Right lobe of liver (tissue), 6 donors: ENCODE measurements at regions of chr14 and their contacts with region 1.

Region 1: GRCh38 chr14:70027785-70028428 is 148.7 kb downstream of the SMOC1 start:
- DNase-seq: peak; percentile 71 to 76 (median 72)
- ATAC-seq: peak; percentile 70 to 89 (median 76)
- H3K4me3 ChIP-seq: no peak overlapping the region
- H3K27ac ChIP-seq: peak overlapping the region in 1 of 3 donors; percentile 59
- H3K4me1 ChIP-seq: peaks cover 0 to 21% (median 4%) of the 10 kb centered on the region in 4 donors
- H3K27me3 ChIP-seq: no peaks in the 10 kb centered on the region
- CTCF ChIP-seq: peak; percentile 79 to 87 (median 83)
- POLR2A ChIP-seq: no peak

Region 2: DNA sequence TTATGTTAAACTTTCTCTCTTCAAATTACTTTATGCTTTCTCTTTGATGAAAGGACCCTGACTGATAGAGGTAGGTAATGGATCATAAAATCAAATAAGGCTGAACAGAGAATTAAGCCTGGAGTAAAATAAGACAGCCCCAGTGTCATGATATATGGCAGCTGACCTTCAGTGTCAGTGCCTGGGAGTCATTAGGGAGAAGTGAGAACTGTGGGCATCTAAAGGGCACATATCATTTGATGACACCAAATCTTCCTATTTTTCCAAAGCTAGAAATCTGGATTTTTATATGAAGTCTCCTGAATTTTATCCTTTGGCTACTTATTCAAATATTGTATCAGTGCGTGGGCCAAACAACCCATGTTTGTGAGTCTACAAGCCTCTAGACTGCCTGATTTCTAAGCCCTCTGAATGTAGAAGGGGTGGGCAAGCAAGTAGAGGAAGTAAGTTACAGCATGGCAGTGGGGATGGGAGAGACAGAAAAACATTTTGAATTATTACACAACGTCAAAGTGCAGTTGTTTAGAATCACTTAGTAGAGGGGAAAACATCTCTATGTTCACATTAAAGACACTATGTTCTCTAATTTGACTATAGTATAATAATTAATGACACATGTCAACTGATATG is 619.5 kb before region 1 on chr14:
- intact Hi-C with region 1: no loop called
- DNase-seq: no peak
- ATAC-seq: no peak
- H3K4me3 ChIP-seq: no peak overlapping the region
- H3K27ac ChIP-seq: no peak overlapping the region
- H3K4me1 ChIP-seq: peaks cover 0 to 5% (median 0%) of the 10 kb centered on the region in 4 donors
- H3K27me3 ChIP-seq: no peaks in the 10 kb centered on the region
- CTCF ChIP-seq: no peak
- POLR2A ChIP-seq: no peak

Region 3: GRCh38 chr14:69818757-69819191 is 209.1 kb before region 1 on chr14:
- intact Hi-C with region 1: loop called in 1 of 2 experiments (anchors 5 kb)
- DNase-seq: no peak
- ATAC-seq: peak; percentile 93 to 97 (median 96)
- H3K4me3 ChIP-seq: no peak overlapping the region
- H3K27ac ChIP-seq: no peak overlapping the region
- H3K4me1 ChIP-seq: no peaks in the 10 kb centered on the region
- H3K27me3 ChIP-seq: no peaks in the 10 kb centered on the region
- CTCF ChIP-seq: peak; percentile 77 to 90 (median 80)
- POLR2A ChIP-seq: no peak

Region 4: DNA sequence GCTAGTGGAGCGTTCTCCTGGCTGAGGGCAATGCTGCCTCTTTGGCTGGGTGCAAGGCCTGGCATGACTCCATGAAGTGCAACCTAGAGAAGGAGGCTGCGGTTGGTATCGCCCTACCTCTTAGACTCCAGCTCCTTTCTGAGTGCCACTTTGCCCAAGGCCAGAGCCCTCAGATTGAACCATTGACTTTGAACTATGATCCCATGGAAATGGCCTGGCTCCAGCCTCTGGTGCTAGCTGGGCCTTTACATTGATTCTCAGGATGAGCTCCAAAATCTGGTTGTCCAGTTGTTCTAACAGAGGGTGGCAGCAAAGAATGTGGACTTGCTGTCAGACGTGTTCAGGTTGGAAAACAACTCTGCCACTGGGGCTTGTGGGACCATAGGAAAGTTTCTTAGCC is 164.8 kb before region 1 on chr14:
- intact Hi-C with region 1: loop called in 1 of 2 experiments (anchors 10 kb)
- DNase-seq: peak; percentile 49 to 77 (median 71)
- ATAC-seq: peak; percentile 97 to 99 (median 98)
- H3K4me3 ChIP-seq: no peak overlapping the region
- H3K27ac ChIP-seq: peak overlapping the region in 2 of 3 donors; percentile 61 to 65
- H3K4me1 ChIP-seq: peaks cover 0 to 10% (median 2%) of the 10 kb centered on the region in 4 donors
- H3K27me3 ChIP-seq: no peaks in the 10 kb centered on the region
- CTCF ChIP-seq: peak; percentile 46 to 64 (median 56)
- POLR2A ChIP-seq: no peak